Aorta (tissue), 5 donors: ENCODE measurements at regions of chr3 and their contacts with region 1.

Region 1: GRCh38 chr3:57597122-57597923 is at the start of gene ARF4:
- DNase-seq: peak; percentile 100
- ATAC-seq: peak; percentile 99
- H3K4me3 ChIP-seq: peak within 1 kb of the TSS; percentile 87 to 95
- H3K27ac ChIP-seq: peak within 1 kb of the TSS; percentile 85 to 97
- H3K4me1 ChIP-seq: peaks cover 0 to 3% of the 10 kb centered on the region in 2 donors
- H3K27me3 ChIP-seq: no peaks in the 10 kb centered on the region
- total RNA-seq, gene ARF4: 148 TPM

Region 2: GRCh38 chr3:57692259-57693147 is 95.2 kb after region 1 on chr3 and contains the start of gene DENND6A:
- intact Hi-C with region 1: loop called in 1 of 2 experiments (anchors 5 kb)
- DNase-seq: peak; percentile 98 to 99
- ATAC-seq: peak; percentile 97
- H3K4me3 ChIP-seq: peak within 1 kb of the TSS; percentile 63 to 76
- H3K27ac ChIP-seq: peak within 1 kb of the TSS; percentile 84 to 95
- H3K4me1 ChIP-seq: peaks cover 3 to 9% of the 10 kb centered on the region in 2 donors
- H3K27me3 ChIP-seq: no peaks in the 10 kb centered on the region
- total RNA-seq, gene DENND6A: 38.6 to 41.0 TPM

Region 3: DNA sequence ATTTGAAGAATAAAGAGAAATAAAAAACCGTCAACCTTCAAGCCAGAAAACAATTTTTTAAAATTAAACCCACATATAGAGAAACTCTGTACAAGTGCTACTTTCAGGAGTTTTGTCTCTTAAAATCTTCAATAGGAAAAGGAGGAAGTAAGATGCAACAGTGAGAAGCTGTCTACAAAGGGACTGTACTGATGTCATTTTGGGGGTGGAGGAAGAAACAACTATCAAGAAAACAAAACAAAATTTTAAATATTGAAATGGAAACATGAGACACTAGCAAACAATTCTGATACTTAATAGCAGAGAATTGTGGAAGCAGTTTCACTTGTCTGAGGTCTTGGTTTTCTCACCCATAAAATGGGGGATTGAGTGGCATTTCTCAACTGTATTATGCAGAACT is 243.2 kb after region 1 on chr3:
- intact Hi-C with region 1: no loop called
- DNase-seq: no peak
- ATAC-seq: no peak
- H3K4me3 ChIP-seq: no peak overlapping the region
- H3K27ac ChIP-seq: no peak overlapping the region
- H3K4me1 ChIP-seq: no peaks in the 10 kb centered on the region
- H3K27me3 ChIP-seq: no peaks in the 10 kb centered on the region